ENCODE measurements at regions of chr1 and their contacts with region 1.

Region 1: GRCh38 chr1:108559215-108560186 is at the start of gene EEIG2:
- DNase-seq: peak; percentile 93
- CTCF ChIP-seq: peak; percentile 90

Region 2: GRCh38 chr1:107877092-107877491 is 682.4 kb before region 1 on chr1:
- in situ Hi-C with region 1: no loop called
- DNase-seq: no peak
- CTCF ChIP-seq: no peak

Region 3: GRCh38 chr1:108503076-108503740 is 56.3 kb before region 1 on chr1:
- in situ Hi-C with region 1: loop called (anchors 5 kb)
- DNase-seq: no peak
- CTCF ChIP-seq: no peak

Region 4: DNA sequence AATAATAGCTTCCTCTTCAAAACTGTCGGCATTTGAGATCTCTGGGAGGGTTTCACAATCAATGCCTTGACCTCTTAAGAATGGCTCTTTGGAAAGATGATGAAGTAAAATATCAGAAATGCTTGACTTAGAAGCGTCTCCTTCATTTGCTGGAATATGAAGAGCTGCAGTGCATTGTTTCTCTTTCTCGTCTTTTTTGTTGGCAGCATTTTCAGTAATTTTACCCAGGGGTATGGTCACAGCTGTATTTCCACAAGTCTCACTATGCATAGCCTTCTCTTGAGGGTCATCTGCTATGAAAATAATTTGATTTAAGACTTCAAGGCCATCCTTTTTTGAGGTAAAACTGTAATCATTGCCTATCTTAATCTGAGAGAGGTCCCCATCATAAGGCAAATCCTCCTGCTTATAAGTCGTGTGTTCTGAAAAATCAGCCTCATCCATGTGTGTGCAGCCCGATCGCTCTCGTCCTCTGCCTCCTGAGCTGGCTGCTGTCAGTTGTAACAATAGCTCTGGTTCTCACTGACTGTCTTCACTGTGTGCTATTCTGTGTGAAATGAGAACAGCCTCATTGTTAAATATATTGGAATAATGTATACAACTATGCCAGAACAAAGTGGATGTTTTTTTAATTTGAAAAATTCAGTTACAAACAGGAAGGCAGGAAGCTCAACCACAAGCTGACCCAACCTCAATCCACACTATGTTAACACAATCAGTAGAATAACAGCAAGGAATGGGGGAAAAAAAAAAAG is 292.9 kb after region 1 on chr1:
- in situ Hi-C with region 1: no loop called
- DNase-seq: no peak
- CTCF ChIP-seq: no peak

Region 5: GRCh38 chr1:109041621-109042468 is 482.3 kb after region 1 on chr1 and contains the start of gene WDR47:
- in situ Hi-C with region 1: no loop called
- DNase-seq: peak; percentile 99
- CTCF ChIP-seq: no peak